ENCODE measurements at regions of chr1 and their contacts with region 1.

Region 1: GRCh38 chr1:232630047-232630893 is at the start of gene SIPA1L2:
- DNase-seq: peak; percentile 91
- H3K4me3 Mint-ChIP-seq: peak within 1 kb of the TSS; percentile 84
- H3K27ac Mint-ChIP-seq: peak within 1 kb of the TSS; percentile 75
- H3K4me1 Mint-ChIP-seq: peaks cover 34% of the 10 kb centered on the region
- H3K27me3 Mint-ChIP-seq: peaks cover 12% of the 10 kb centered on the region
- total RNA-seq, gene SIPA1L2: 6.1 to 6.2 TPM

Region 2: DNA sequence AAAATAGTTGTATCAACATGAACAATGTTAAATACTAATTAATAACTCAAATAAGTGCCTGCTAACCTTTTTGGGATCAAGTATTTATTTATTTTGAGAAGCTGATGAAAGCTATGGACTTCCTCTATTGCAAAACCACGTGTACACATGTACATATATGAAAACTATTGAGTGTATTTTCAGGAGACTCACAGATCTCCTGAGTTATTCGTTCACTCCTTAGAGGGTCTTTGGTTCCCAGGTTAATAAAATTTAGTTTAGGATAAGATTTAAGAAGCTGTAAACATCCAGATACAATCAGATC is 873.2 kb before region 1 on chr1:
- CTCF ChIA-PET with region 1: no interaction called
- POLR2A ChIA-PET with region 1: no interaction called
- intact Hi-C with region 1: loop called (anchors 5 kb)
- DNase-seq: no peak
- H3K4me3 Mint-ChIP-seq: no peak overlapping the region
- H3K27ac Mint-ChIP-seq: no peak overlapping the region
- H3K4me1 Mint-ChIP-seq: no peaks in the 10 kb centered on the region
- H3K27me3 Mint-ChIP-seq: no peaks in the 10 kb centered on the region

Region 3: DNA sequence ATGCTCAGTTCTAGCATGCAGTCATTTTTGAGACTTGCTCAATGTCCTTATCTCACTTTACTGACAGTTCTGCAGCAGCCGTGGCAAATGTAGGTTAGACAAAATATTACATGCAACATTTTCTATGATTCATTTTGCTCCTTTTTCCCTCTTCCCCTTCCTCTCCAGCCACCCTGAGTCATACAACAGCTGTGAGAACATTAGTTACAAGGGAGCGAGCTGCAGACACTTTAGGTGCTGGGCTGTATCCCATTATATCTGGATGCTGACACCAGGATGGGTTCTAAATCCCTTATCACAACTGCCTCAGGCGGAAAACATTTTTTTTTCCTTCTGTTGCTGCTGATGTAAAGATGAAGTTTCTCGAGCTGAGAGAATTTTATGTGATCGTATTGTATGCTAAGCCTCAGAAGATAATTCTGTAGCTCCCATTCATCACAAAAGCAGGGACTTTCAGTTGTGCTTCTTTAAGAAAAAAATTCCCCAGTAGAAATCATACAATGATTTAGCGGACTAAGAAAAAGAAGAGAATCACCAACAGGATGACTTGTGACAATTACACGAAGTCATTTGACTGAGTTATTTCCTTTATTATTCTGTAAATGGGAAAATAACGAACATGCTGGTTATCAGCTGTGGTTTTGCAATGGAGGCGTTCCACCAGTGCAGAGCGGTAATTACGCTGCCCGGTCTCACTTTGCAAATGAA is 658.7 kb before region 1 on chr1:
- CTCF ChIA-PET with region 1: no interaction called
- POLR2A ChIA-PET with region 1: no interaction called
- intact Hi-C with region 1: loop called (anchors 10 kb)
- DNase-seq: no peak
- H3K4me3 Mint-ChIP-seq: no peak overlapping the region
- H3K27ac Mint-ChIP-seq: no peak overlapping the region
- H3K4me1 Mint-ChIP-seq: peaks cover 10% of the 10 kb centered on the region
- H3K27me3 Mint-ChIP-seq: no peaks in the 10 kb centered on the region

Region 4: GRCh38 chr1:232226197-232226712 is 404.0 kb before region 1 on chr1:
- CTCF ChIA-PET with region 1: no interaction called
- POLR2A ChIA-PET with region 1: no interaction called
- intact Hi-C with region 1: loop called (anchors 10 kb)
- DNase-seq: peak; percentile 60
- H3K4me3 Mint-ChIP-seq: no peak overlapping the region
- H3K27ac Mint-ChIP-seq: peak overlapping the region; percentile 29
- H3K4me1 Mint-ChIP-seq: peaks cover 9% of the 10 kb centered on the region
- H3K27me3 Mint-ChIP-seq: no peaks in the 10 kb centered on the region

Region 5: DNA sequence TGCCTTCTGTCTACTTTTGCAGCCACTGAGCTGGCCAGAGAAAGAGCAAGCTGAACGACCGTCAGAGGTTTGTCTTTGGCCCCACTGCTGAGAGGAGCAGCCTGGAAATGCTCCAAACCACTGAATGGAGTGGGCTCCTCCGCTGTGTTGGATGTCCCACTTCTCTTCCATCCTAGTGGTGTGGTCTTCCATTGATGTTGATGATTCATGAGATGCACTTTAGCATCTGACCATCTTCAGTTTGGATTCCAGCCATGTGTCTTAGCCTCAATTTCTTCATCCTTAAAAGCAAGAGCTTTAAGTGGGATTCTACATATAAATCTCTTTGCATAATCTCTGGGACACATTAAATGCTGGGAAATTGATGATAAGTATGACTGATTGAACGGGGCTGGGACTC is 277.3 kb before region 1 on chr1:
- CTCF ChIA-PET with region 1: no interaction called
- POLR2A ChIA-PET with region 1: no interaction called
- intact Hi-C with region 1: no loop called
- DNase-seq: no peak
- H3K4me3 Mint-ChIP-seq: no peak overlapping the region
- H3K27ac Mint-ChIP-seq: no peak overlapping the region
- H3K4me1 Mint-ChIP-seq: no peaks in the 10 kb centered on the region
- H3K27me3 Mint-ChIP-seq: peaks cover 9% of the 10 kb centered on the region

Region 6: DNA sequence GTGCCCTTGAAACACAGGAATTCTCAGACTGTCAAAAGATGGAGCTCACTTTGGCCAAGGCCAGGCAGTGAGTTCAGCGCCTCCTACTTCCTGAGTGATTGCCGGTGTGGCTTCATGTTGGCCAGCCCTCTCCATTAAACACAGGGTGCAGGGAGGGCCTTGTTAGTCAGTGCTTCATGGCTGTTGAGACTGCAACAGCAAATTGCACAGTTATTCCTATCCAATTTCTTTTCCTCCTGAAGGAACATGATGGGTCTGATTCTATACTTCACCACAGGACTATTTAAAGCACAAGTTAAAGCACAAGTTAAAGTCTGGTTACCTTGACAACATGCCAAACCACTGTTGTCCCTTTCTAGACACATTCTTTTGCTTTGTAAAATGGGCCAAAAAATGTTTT is 156.9 kb before region 1 on chr1:
- CTCF ChIA-PET with region 1: no interaction called
- POLR2A ChIA-PET with region 1: no interaction called
- intact Hi-C with region 1: no loop called
- DNase-seq: no peak
- H3K4me3 Mint-ChIP-seq: no peak overlapping the region
- H3K27ac Mint-ChIP-seq: no peak overlapping the region
- H3K4me1 Mint-ChIP-seq: peaks cover 6% of the 10 kb centered on the region
- H3K27me3 Mint-ChIP-seq: peaks cover 2% of the 10 kb centered on the region

Region 7: GRCh38 chr1:232579958-232580941 is 50.0 kb before region 1 on chr1:
- CTCF ChIA-PET with region 1: interaction called, 4 read pairs
- POLR2A ChIA-PET with region 1: no interaction called
- intact Hi-C with region 1: loop called (anchors 2 kb)
- DNase-seq: peak; percentile 64
- H3K4me3 Mint-ChIP-seq: no peak overlapping the region
- H3K27ac Mint-ChIP-seq: peak overlapping the region; percentile 69
- H3K4me1 Mint-ChIP-seq: peaks cover 49% of the 10 kb centered on the region
- H3K27me3 Mint-ChIP-seq: no peaks in the 10 kb centered on the region

Region 8: DNA sequence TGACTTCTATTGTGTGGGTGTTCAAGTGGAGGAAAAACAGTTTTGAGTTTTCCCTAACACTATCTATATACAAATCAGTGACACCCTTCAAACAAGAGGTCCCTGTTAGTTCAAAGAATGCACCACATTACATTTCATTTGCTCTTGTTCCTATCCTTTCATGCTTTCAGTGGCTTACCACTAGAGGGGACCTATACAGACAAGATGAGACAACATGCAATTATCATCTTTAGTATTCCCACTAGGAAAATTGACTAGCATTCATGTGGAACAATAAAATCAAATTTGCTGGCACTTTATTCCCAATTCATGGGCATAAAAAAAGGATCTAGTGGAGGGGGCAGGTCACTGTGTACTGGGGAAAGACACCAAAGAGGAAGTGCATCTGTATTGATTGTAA is 13.0 kb after region 1 on chr1:
- CTCF ChIA-PET with region 1: no interaction called
- POLR2A ChIA-PET with region 1: no interaction called
- intact Hi-C with region 1: no loop called
- DNase-seq: no peak
- H3K4me3 Mint-ChIP-seq: no peak overlapping the region
- H3K27ac Mint-ChIP-seq: no peak overlapping the region
- H3K4me1 Mint-ChIP-seq: no peaks in the 10 kb centered on the region
- H3K27me3 Mint-ChIP-seq: peaks cover 7% of the 10 kb centered on the region

Region 9: GRCh38 chr1:232950197-232951176 is 320.2 kb after region 1 on chr1 and contains the start of gene NTPCR:
- CTCF ChIA-PET with region 1: interaction called, 3 read pairs
- POLR2A ChIA-PET with region 1: no interaction called
- intact Hi-C with region 1: loop called (anchors 1 kb)
- DNase-seq: peak; percentile 96
- H3K4me3 Mint-ChIP-seq: peak within 1 kb of the TSS; percentile 93
- H3K27ac Mint-ChIP-seq: peak within 1 kb of the TSS; percentile 89
- H3K4me1 Mint-ChIP-seq: peaks cover 34% of the 10 kb centered on the region
- H3K27me3 Mint-ChIP-seq: no peaks in the 10 kb centered on the region
- total RNA-seq, gene NTPCR: 41.7 to 45.0 TPM

Region 10: DNA sequence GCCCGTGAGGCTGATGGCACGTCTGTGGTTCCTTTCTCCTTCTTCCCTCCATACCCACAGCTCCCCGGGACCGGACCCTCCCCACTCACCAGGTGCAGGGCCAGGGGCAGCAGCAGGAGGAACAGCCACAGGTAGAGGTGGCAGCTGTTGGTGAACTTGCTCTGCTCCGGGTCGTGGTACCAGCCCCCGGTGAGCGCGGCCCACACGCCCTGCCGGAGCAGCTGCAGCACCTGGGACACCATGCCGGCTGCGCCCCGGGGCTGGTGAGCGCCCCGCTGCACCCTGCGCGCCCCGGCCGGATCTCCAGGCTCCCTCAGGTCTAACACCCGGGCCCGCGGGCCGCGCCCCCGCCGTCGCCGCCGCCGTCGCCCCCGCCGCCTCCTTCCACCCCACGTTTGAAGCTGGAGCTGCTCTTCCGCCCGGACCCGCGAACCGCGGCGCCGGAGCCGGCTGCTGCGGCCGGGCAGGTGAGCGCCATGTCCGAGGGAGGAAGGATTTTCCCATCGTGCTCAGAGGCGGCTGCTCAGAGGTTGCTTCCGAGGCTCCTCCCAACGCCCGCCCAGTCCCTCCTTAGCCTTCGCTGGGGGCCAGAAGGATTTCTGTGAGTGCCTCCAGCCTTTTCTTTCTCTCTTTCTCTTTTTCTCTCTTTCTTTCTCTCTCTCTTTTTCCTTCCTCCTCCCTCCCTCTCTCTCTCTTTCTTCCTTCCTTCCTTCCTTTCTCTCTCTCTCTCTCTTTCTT is 665.1 kb after region 1 on chr1 and contains the start of gene PCNX2:
- CTCF ChIA-PET with region 1: no interaction called
- POLR2A ChIA-PET with region 1: interaction called, 3 read pairs
- intact Hi-C with region 1: loop called (anchors 10 kb)
- DNase-seq: peak; percentile 84
- H3K4me3 Mint-ChIP-seq: peak within 1 kb of the TSS; percentile 94
- H3K27ac Mint-ChIP-seq: peak within 1 kb of the TSS; percentile 96
- H3K4me1 Mint-ChIP-seq: peaks cover 31% of the 10 kb centered on the region
- H3K27me3 Mint-ChIP-seq: no peaks in the 10 kb centered on the region
- total RNA-seq, gene PCNX2: 17.8 to 18.5 TPM

Measured in activated CD4-positive, alpha-beta memory T cell treated with anti-CD3 and anti-CD28 coated beads for 36 hours (primary cell).